ENCODE measurements at regions of chr11 and their contacts with region 1.

Region 1: GRCh38 chr11:118401151-118401878 is at the start of gene ATP5MG:
- DNase-seq: peak; percentile 97
- H3K4me3 ChIP-seq: peak within 1 kb of the TSS; percentile 79
- H3K27ac ChIP-seq: peak within 1 kb of the TSS; percentile 77
- H3K4me1 ChIP-seq: peaks cover 53% of the 10 kb centered on the region
- CTCF ChIP-seq: 0 out of 2 replicates have a peak, but pooled peaks have one; percentile 22
- total RNA-seq, gene ATP5MG: 212 and 222 TPM in 2 replicates

Region 2: DNA sequence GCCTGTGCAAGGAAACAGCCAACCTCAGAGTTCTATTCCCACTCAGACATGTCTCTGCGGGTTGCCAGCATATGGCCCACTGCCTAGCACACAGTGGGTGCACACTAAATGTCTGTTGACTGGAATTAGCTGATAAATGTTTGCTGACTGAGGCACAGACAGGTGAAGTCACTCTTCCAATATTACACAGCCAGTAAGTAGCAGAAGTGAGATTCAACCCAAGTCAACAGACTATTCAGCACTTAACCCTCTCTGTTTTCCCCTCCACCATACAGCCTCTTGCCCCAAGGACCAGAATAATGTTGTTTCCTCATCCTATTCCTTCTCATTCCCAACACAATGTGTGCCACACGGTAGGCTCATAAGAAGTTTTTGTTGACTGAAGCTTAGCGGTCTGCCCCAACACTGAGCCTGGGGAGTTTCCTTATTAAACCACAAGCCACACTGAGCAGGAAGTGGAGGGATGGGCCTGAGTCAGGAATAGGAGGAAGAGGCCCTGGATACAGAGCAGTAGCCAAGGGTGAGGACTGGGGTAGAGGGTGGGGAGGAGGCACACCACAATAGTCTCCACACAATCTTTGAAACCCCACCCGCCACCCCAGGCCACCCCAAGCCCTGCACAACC is 430.8 kb before region 1 on chr11:
- CTCF ChIA-PET with region 1: no interaction called
- POLR2A ChIA-PET with region 1: no interaction called
- intact Hi-C with region 1: no loop called
- DNase-seq: no peak
- H3K4me3 ChIP-seq: no peak overlapping the region
- H3K27ac ChIP-seq: no peak overlapping the region
- H3K4me1 ChIP-seq: no peaks in the 10 kb centered on the region
- CTCF ChIP-seq: no peak

Region 3: GRCh38 chr11:118359295-118359958 is 41.9 kb before region 1 on chr11 and contains the start of gene UBE4A:
- CTCF ChIA-PET with region 1: no interaction called
- POLR2A ChIA-PET with region 1: interaction called, 7 read pairs
- intact Hi-C with region 1: loop called (anchors 2 kb)
- DNase-seq: peak; percentile 99
- H3K4me3 ChIP-seq: peak within 1 kb of the TSS; percentile 97
- H3K27ac ChIP-seq: peak within 1 kb of the TSS; percentile 39
- H3K4me1 ChIP-seq: peaks cover 21% of the 10 kb centered on the region
- CTCF ChIP-seq: no peak
- total RNA-seq, gene UBE4A: 24.1 and 28.0 TPM in 2 replicates

Region 4: DNA sequence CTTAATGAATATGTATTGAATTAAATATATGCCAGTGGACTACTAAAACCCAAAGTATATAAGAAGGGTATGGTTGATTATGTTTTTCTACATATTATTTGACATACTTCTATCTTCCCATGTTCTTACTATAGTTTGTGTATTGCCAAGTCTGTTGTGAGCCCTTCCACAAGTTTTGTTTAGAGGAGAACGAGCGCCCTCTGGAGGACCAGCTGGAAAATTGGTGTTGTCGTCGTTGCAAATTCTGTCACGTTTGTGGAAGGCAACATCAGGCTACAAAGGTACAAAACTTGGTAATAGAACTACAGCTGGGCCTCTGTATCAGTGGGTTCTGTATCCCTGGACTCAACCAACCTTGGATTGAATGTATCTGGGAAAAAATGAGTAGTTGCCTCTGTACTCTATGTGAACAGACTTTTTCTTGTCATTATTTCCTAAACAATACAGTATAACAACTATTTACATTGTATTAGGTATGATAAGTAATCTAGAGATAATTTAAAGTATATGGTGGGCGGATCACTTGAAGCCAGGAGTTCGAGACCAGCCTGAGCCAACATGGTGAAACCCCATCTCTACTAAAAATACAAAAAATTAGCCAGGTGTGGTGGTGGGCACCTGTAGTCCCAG is 87.3 kb after region 1 on chr11:
- CTCF ChIA-PET with region 1: no interaction called
- POLR2A ChIA-PET with region 1: no interaction called
- intact Hi-C with region 1: loop called (anchors 1 kb)
- DNase-seq: peak; percentile 79
- H3K4me3 ChIP-seq: no peak overlapping the region
- H3K27ac ChIP-seq: no peak overlapping the region
- H3K4me1 ChIP-seq: no peaks in the 10 kb centered on the region
- CTCF ChIP-seq: peak; percentile 99